ENCODE measurements at regions of chr3 and their contacts with region 1.

Region 1: GRCh38 chr3:128617557-128618397 is 32.8 kb downstream of the RPN1 start:
- DNase-seq: peak; percentile 88
- H3K4me3 ChIP-seq: peak overlapping the region; percentile 46 to 87 (median 62)
- H3K27ac ChIP-seq: peak overlapping the region; percentile 19
- H3K4me1 ChIP-seq: peaks cover 34% of the 10 kb centered on the region
- H3K27me3 ChIP-seq: no peaks in the 10 kb centered on the region
- CTCF ChIP-seq: peak; percentile 77 to 83

Region 2: GRCh38 chr3:128376516-128376915 is 241.3 kb before region 1 on chr3:
- CTCF ChIA-PET with region 1: interaction called, 10 read pairs
- dilution Hi-C with region 1: no loop called
- in situ Hi-C with region 1: no loop called
- intact Hi-C with region 1: no loop called
- DNase-seq: no peak
- H3K4me3 ChIP-seq: no peak overlapping the region
- H3K27ac ChIP-seq: no peak overlapping the region
- H3K4me1 ChIP-seq: no peaks in the 10 kb centered on the region
- H3K27me3 ChIP-seq: no peaks in the 10 kb centered on the region
- CTCF ChIP-seq: no peak

Region 3: GRCh38 chr3:128650096-128651050 is 32.6 kb after region 1 on chr3 and contains the start of gene RPN1:
- CTCF ChIA-PET with region 1: no interaction called
- dilution Hi-C with region 1: no loop called
- in situ Hi-C with region 1: no loop called
- intact Hi-C with region 1: loop called (anchors 2 kb)
- DNase-seq: peak; percentile 90
- H3K4me3 ChIP-seq: peak within 1 kb of the TSS; percentile 90 to 100 (median 100)
- H3K27ac ChIP-seq: peak within 1 kb of the TSS; percentile 95
- H3K4me1 ChIP-seq: peaks cover 6% of the 10 kb centered on the region
- H3K27me3 ChIP-seq: no peaks in the 10 kb centered on the region
- CTCF ChIP-seq: no peak
- total RNA-seq, gene RPN1: 206 to 305 TPM

Region 4: GRCh38 chr3:128745742-128746141 is 128.0 kb after region 1 on chr3:
- CTCF ChIA-PET with region 1: no interaction called
- dilution Hi-C with region 1: no loop called
- in situ Hi-C with region 1: no loop called
- intact Hi-C with region 1: no loop called
- DNase-seq: no peak
- H3K4me3 ChIP-seq: no peak overlapping the region
- H3K27ac ChIP-seq: no peak overlapping the region
- H3K4me1 ChIP-seq: no peaks in the 10 kb centered on the region
- H3K27me3 ChIP-seq: no peaks in the 10 kb centered on the region
- CTCF ChIP-seq: no peak

Region 5: GRCh38 chr3:128845778-128846485 is 228.2 kb after region 1 on chr3:
- CTCF ChIA-PET with region 1: no interaction called
- dilution Hi-C with region 1: no loop called
- in situ Hi-C with region 1: no loop called
- intact Hi-C with region 1: loop called (anchors 1 kb)
- DNase-seq: peak; percentile 59
- H3K4me3 ChIP-seq: peak overlapping the region in 2 of 3 experiments; percentile 24 to 28
- H3K27ac ChIP-seq: no peak overlapping the region
- H3K4me1 ChIP-seq: peaks cover 7% of the 10 kb centered on the region
- H3K27me3 ChIP-seq: no peaks in the 10 kb centered on the region
- CTCF ChIP-seq: peak; percentile 26 to 52

Region 6: GRCh38 chr3:128879125-128879969 is 261.6 kb after region 1 on chr3 and contains the start of gene ACAD9:
- CTCF ChIA-PET with region 1: no interaction called
- dilution Hi-C with region 1: no loop called
- in situ Hi-C with region 1: no loop called
- intact Hi-C with region 1: loop called (anchors 2 kb)
- DNase-seq: peak; percentile 97
- H3K4me3 ChIP-seq: peak within 1 kb of the TSS; percentile 82 to 98 (median 94)
- H3K27ac ChIP-seq: peak within 1 kb of the TSS; percentile 97
- H3K4me1 ChIP-seq: peaks cover 21% of the 10 kb centered on the region
- H3K27me3 ChIP-seq: no peaks in the 10 kb centered on the region
- CTCF ChIP-seq: no peak
- total RNA-seq, gene ACAD9: 35.2 to 48.7 TPM

Measured in mammary epithelial cell (primary cell).